Activated B cell treated with CpG ODN at 0.5 μM for 24 hours (primary cell): ENCODE measurements at regions of chr17 and their contacts with region 1.

Region 1: DNA sequence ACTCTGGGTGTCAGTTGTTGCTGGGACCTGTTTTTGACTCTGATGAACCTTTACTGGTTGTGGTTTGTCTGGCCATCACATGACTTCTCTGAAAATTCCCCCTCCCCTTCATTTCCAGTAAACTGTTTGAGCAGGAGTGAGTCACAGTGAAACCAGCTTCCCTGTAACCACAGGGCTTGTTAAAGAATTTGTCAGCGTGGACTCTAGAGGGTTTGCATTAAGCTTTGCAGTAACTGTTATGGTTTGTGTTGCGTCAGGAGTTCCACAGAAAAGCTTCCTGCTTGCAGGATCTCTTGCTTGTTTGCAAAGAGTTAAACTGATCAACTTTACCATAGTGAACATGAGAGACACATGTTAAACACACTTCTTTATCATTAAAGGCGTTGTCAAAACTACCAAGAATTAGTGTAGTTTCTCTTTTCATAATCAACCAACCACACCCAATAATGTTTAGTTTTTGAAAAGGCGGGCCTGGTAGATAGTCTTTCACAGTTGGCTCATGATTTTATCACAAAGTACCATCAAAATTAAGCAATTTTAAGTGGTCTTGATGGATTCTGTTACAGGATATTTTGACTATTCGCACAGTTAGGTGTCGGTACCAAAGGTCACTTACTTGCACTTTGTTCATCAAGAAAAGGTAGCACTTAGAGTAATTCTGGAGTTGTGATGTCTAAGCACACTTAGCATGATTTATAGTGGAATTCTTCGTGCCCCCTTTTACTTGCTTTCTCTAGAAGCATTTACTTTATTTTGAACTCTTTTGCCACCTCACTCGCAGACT is 79.3 kb downstream of the VMP1 start:
- DNase-seq: peak; percentile 33
- ATAC-seq: peak; percentile 86
- H3K4me3 Mint-ChIP-seq: peak overlapping the region; percentile 72
- H3K27ac Mint-ChIP-seq: peak overlapping the region; percentile 97
- H3K4me1 Mint-ChIP-seq: peaks cover 58% of the 10 kb centered on the region
- H3K27me3 Mint-ChIP-seq: no peaks in the 10 kb centered on the region
- CTCF ChIP-seq: no peak

Region 2: GRCh38 chr17:59688008-59688407 is 98.7 kb before region 1 on chr17:
- CTCF ChIA-PET with region 1: no interaction called
- POLR2A ChIA-PET with region 1: no interaction called
- intact Hi-C with region 1: no loop called
- DNase-seq: no peak
- ATAC-seq: no peak
- H3K4me3 Mint-ChIP-seq: no peak overlapping the region
- H3K27ac Mint-ChIP-seq: peak overlapping the region; percentile 50
- H3K4me1 Mint-ChIP-seq: peaks cover 3% of the 10 kb centered on the region
- H3K27me3 Mint-ChIP-seq: no peaks in the 10 kb centered on the region
- CTCF ChIP-seq: no peak

Region 3: DNA sequence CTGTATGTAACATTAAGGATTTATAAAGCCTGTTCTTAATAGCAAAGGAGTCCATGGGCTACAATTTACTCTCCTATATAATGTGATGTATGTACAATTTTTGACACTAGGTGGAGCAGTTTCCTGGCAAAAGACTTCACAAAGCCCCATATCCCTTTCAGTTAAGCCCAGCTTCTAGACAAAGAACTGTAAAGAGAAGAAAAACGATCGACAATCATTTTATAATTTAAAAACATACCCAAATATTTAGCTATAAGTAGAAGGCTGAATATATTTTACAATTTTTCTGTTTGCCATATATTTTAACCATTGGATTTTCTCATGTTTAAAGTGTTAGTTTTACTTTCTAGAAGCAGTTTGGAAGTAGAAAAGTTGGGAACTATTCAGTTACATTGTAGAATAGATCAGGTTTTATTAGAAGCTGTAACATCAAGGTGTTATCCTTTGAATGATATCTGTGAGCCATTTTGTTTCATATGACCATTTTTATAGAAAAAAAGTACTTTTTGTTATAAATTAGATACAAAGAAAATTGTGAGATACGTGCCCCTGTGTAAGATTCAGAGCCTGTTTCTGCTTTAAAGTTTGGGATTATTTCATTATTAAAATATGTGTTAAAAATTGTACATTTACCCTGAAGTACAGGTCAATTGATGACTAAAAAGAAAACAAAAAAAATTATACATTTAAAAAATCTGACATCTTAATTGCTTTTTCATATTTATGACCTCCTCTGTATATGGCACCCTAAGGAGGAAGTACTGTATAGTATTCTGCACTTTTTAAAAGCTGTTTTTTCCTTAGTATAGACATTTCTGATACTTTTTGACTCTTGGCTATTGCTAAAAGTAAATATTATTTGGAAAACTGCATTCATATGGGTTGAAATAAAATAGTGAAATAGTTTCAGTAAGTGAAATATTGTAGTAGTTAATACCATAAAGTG is 32.9 kb before region 1 on chr17:
- CTCF ChIA-PET with region 1: interaction called, 18 read pairs
- POLR2A ChIA-PET with region 1: interaction called, 31 read pairs
- intact Hi-C with region 1: loop called (anchors 1 kb)
- DNase-seq: no peak
- ATAC-seq: peak; percentile 96
- H3K4me3 Mint-ChIP-seq: no peak overlapping the region
- H3K27ac Mint-ChIP-seq: peak overlapping the region; percentile 65
- H3K4me1 Mint-ChIP-seq: peaks cover 18% of the 10 kb centered on the region
- H3K27me3 Mint-ChIP-seq: no peaks in the 10 kb centered on the region
- CTCF ChIP-seq: peak; percentile 20

Region 4: DNA sequence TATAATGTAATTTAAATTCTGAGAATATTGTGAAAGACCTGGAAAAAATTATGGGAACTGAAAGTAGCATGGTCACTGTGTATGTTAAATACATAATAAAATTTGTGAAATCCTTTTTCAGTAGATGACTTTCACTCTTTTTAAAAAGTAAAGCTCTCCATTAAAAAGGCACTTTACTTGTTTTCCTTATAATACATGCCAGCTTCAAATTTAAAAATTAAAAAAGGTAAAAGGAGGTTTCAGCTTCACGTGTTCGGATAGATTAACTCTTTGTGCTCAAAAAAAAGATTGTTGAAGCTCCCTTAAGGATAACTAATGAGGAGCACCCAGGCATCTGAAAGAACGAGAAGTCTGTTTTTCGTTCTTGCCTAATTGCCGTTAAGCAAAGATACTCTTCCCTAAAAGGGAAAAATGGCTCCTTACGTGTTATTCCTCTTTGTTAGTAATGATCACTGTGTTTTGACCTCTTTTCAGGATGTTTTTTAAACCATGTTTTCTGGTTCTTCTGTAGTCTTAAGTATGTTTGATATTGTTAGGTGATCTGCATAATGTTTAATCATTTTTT is 18.3 kb after region 1 on chr17:
- CTCF ChIA-PET with region 1: interaction called, 3 read pairs
- POLR2A ChIA-PET with region 1: interaction called, 14 read pairs
- intact Hi-C with region 1: no loop called
- DNase-seq: no peak
- ATAC-seq: no peak
- H3K4me3 Mint-ChIP-seq: peak overlapping the region; percentile 71
- H3K27ac Mint-ChIP-seq: peak overlapping the region; percentile 76
- H3K4me1 Mint-ChIP-seq: peaks cover 11% of the 10 kb centered on the region
- H3K27me3 Mint-ChIP-seq: no peaks in the 10 kb centered on the region
- CTCF ChIP-seq: no peak

Region 5: GRCh38 chr17:59837308-59838051 is 50.8 kb after region 1 on chr17:
- CTCF ChIA-PET with region 1: interaction called, 36 read pairs
- POLR2A ChIA-PET with region 1: interaction called, 379 read pairs
- intact Hi-C with region 1: loop called (anchors 1 kb)
- DNase-seq: no peak
- ATAC-seq: peak; percentile 87
- H3K4me3 Mint-ChIP-seq: peak overlapping the region; percentile 96
- H3K27ac Mint-ChIP-seq: peak overlapping the region; percentile 97
- H3K4me1 Mint-ChIP-seq: peaks cover 60% of the 10 kb centered on the region
- H3K27me3 Mint-ChIP-seq: no peaks in the 10 kb centered on the region
- CTCF ChIP-seq: no peak

Region 6: GRCh38 chr17:59853168-59853918 is 66.6 kb after region 1 on chr17:
- CTCF ChIA-PET with region 1: interaction called, 8 read pairs
- POLR2A ChIA-PET with region 1: interaction called, 106 read pairs
- intact Hi-C with region 1: loop called (anchors 1 kb)
- DNase-seq: no peak
- ATAC-seq: peak; percentile 78
- H3K4me3 Mint-ChIP-seq: no peak overlapping the region
- H3K27ac Mint-ChIP-seq: peak overlapping the region; percentile 78
- H3K4me1 Mint-ChIP-seq: peaks cover 25% of the 10 kb centered on the region
- H3K27me3 Mint-ChIP-seq: no peaks in the 10 kb centered on the region
- CTCF ChIP-seq: no peak

Region 7: DNA sequence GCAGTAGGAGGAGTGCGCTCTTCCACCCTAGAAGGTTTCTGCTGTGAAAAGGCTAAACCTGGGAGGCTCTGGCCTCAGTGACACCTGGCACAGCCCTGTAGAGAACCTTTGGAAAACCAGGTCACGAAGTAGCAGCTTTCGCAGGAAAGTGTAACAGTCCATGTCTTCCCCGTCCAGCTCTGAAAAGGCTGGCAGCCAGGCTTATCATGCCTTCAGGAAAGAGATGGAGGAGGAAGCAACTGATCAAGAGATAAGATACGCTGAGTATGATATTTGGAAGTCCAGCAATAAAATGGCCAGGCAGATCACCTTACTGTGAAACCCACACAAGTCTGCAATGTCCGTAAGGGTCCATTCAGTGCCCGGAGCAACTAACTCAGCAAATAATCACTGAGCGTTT is 83.8 kb after region 1 on chr17:
- CTCF ChIA-PET with region 1: no interaction called
- POLR2A ChIA-PET with region 1: no interaction called
- intact Hi-C with region 1: no loop called
- DNase-seq: no peak
- ATAC-seq: no peak
- H3K4me3 Mint-ChIP-seq: no peak overlapping the region
- H3K27ac Mint-ChIP-seq: no peak overlapping the region
- H3K4me1 Mint-ChIP-seq: no peaks in the 10 kb centered on the region
- H3K27me3 Mint-ChIP-seq: no peaks in the 10 kb centered on the region
- CTCF ChIP-seq: no peak

Region 8: GRCh38 chr17:59892924-59893676 is 106.4 kb after region 1 on chr17 and contains the starts of genes RPS6KB1 and TUBD1:
- CTCF ChIA-PET with region 1: no interaction called
- POLR2A ChIA-PET with region 1: interaction called, 11 read pairs
- intact Hi-C with region 1: loop called (anchors 1 kb)
- DNase-seq: peak; percentile 86
- ATAC-seq: peak; percentile 91
- H3K4me3 Mint-ChIP-seq: peak within 1 kb of the TSS; percentile 99
- H3K27ac Mint-ChIP-seq: peak within 1 kb of the TSS; percentile 98
- H3K4me1 Mint-ChIP-seq: peaks cover 44% of the 10 kb centered on the region
- H3K27me3 Mint-ChIP-seq: no peaks in the 10 kb centered on the region
- CTCF ChIP-seq: no peak
- total RNA-seq, gene RPS6KB1: 57.7 and 63.0 TPM in 2 replicates
- total RNA-seq, gene TUBD1: 10.5 and 15.1 TPM in 2 replicates

Region 9: GRCh38 chr17:60493791-60494712 is 707.3 kb after region 1 on chr17:
- CTCF ChIA-PET with region 1: no interaction called
- POLR2A ChIA-PET with region 1: no interaction called
- intact Hi-C with region 1: no loop called
- DNase-seq: no peak
- ATAC-seq: no peak
- H3K4me3 Mint-ChIP-seq: no peak overlapping the region
- H3K27ac Mint-ChIP-seq: no peak overlapping the region
- H3K4me1 Mint-ChIP-seq: no peaks in the 10 kb centered on the region
- H3K27me3 Mint-ChIP-seq: no peaks in the 10 kb centered on the region
- CTCF ChIP-seq: no peak